Vagina (tissue), 2 donors: ENCODE measurements at regions of chr12 and their contacts with region 1.

Region 1: DNA sequence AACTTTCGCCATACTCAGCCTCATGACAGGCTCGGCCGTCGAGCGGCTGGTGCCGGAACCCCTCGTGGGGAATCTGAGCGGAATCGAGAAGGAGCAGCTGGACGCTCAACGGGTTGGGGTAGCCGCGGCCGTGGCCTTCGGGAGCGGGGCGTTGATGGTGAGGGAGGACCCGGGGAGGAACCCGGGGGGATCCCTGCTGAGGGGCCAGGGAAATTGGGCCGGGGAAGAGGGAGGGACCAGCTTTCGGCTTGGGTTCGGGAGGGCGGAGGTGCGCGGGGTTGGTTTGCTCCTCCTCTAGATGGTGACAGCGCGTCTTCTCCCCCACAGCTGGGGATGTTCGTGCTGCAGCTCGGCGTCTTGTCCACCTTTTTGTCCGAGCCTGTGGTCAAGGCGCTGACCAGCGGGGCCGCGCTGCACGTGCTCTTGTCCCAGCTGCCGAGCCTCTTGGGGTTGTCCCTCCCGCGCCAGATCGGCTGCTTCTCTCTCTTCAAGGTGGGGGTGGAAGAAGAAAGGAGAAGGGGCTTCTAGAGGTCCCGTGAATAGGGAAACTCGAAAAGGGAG is 9.8 kb downstream of the ARHGEF25 start:
- DNase-seq: no peak
- H3K4me3 ChIP-seq: peak overlapping the region; percentile 40 to 58
- H3K27ac ChIP-seq: no peak overlapping the region
- H3K4me1 ChIP-seq: peaks cover 21% of the 10 kb centered on the region
- H3K27me3 ChIP-seq: no peaks in the 10 kb centered on the region
- CTCF ChIP-seq: no peak
- POLR2A ChIP-seq: no peak

Region 2: DNA sequence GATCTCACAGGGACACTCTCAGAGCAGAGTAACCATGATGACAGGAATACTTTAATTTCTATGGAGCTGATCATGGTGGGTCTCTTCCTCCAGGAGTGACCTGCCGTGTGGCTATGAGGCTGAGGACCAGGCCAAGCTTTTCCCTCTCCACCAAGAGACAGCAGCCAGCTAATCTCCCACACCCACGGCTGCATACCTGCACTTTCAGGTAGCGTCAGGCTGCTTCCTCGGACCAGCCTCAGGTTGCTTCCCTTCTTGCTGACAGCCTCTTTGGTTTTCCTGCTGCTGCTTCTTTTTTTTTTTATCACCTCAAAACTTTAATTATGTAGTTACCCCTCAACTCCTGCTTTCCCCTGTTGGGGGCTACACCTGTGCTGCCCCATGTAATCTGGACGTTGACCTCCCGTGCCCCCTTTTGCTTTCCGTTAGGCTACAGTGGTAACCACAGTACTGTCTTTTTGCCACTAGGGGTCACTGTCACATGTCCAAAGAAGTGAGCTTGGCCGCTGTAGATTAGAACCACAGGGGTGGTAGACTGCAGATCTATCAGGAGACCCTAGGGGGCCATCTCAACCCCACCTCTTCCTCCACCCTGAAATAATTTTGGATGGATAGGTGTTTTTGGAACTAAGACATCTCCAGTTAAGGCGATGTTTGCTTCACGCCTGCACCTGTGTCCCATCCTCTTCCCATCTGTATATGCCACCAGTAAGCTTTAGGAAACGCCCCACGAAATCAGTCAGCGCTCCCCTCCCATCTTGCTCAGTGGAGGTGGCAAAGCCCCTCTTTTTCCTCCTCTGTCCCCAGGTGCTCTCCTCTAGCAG is 37.8 kb before region 1 on chr12:
- intact Hi-C with region 1: loop called (anchors 1 kb)
- DNase-seq: no peak
- H3K4me3 ChIP-seq: no peak overlapping the region
- H3K27ac ChIP-seq: no peak overlapping the region
- H3K4me1 ChIP-seq: no peaks in the 10 kb centered on the region
- H3K27me3 ChIP-seq: no peaks in the 10 kb centered on the region
- CTCF ChIP-seq: peak; percentile 93 to 98 (median 95)
- POLR2A ChIP-seq: no peak